ENCODE measurements at regions of chr2 and their contacts with region 1.

Region 1: DNA sequence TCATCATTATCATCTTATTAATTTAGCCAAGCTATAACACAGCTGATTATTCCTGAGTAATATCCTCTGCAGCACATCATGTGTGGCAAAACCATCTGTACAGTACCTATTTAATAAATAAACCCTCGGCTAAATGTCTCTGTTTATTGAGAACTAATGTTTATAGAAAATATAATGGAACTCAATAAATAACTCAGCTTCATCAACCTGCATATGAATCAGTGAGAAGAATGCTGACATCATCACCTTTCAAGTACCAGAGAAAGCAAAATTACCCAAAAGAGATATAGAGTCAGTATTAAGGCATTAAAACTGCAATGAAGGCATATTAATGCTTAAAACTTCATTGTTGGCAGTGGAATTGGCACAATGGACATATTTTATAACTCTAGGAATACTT is 558.3 kb downstream of the PLCL1 start:
- DNase-seq: no peak
- ATAC-seq: no peak
- H3K4me3 ChIP-seq: no peak overlapping the region
- H3K27ac ChIP-seq: no peak overlapping the region
- H3K4me1 ChIP-seq: no peaks in the 10 kb centered on the region
- H3K27me3 ChIP-seq: no peaks in the 10 kb centered on the region
- CTCF ChIP-seq: no peak
- POLR2A ChIP-seq: no peak
- RAD21 ChIP-seq: no peak

Region 2: DNA sequence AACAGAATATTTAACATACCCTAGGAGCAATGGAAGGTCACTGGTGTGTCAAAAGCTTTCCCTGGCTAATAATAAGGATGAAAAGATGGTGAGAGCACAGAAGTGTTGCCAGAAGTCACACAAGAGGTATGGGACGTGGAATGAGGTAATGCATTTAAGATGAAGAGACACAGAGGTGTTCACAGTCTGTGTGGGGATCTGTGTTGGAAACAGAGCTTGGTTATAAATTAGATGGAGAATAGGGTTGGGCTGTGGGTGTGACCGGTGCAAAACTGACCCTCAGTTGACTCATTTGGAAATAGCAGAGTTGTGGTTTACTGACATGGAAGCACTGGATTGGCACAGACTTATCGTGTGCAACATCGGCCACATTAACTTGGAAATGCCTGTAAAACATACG is 722.5 kb after region 1 on chr2:
- CTCF ChIA-PET with region 1: no interaction called
- POLR2A ChIA-PET with region 1: no interaction called
- dilution Hi-C with region 1: no loop called
- in situ Hi-C with region 1: no loop called
- intact Hi-C with region 1: loop called (anchors 10 kb)
- DNase-seq: no peak
- ATAC-seq: no peak
- H3K4me3 ChIP-seq: no peak overlapping the region
- H3K27ac ChIP-seq: no peak overlapping the region
- H3K4me1 ChIP-seq: no peaks in the 10 kb centered on the region
- H3K27me3 ChIP-seq: no peaks in the 10 kb centered on the region
- CTCF ChIP-seq: no peak
- POLR2A ChIP-seq: no peak
- RAD21 ChIP-seq: no peak

Measured in IMR-90 (cell line).